PC-3 (cell line): ENCODE measurements at regions of chr4 and their contacts with region 1.

Region 1: DNA sequence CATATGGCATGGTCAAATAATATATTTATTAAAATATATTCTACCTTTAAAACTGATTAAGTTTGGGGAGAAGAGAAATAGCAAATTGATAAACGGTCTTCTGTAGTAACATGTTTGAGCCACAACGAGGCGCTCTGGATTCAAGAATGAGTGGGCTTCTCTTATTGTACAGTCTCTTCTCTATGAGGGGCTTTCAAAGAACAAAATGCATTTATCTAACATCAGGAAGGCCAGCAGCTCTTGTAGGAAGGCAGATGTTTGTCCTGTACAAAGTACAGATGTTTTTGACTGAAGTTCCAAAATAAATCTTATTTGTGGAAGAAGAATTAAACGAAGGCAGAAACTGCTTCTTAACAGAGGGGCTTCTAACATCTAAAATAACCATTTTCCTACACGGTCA is 153.6 kb downstream of the RASL11B start:
- DNase-seq: peak; percentile 53
- ATAC-seq: no peak
- H3K4me3 ChIP-seq: no peak overlapping the region
- H3K27ac ChIP-seq: no peak overlapping the region
- H3K4me1 ChIP-seq: peaks cover 7% of the 10 kb centered on the region
- H3K27me3 ChIP-seq: no peaks in the 10 kb centered on the region
- CTCF ChIP-seq: peak; percentile 83

Region 2: DNA sequence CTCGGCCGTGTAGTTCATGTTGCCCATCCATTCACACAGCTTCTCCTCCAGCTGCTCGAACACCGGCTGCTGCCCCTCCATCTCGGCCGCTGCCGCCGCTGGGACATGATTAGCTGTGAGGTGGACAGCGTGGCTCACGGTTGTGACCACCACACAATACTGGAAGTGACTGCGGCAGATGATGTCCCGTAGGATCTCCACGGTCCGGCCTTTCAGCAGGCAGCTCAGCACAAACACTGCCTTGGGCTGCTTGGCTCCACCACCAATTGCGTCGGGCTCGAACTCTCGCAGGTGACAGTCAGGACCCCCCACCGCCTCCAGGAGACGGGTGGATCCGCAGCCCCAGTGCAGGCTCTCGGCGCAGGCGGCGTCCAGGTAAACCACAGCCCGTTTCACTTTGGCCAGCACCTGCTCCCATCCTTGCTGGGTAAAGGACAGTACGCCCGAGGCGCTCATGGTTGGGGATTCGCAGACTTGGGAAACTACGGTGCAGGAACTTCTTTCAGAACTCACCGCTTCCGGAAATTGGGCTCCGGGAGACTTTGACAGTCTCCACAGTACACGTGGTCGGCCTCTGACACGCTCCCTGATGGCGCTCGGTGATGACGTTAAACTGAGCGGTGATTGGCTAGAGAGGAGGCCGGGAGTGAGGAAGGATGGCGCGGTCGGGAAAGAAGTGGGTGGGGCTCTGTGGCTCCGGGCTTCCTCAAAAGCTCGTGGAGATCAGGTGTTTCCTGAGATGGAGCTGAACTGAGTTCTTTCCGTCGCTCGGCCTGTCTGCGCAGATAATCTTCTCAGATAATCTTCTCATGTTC is 350.0 kb after region 1 on chr4 and contains the start of gene SCFD2:
- CTCF ChIA-PET with region 1: no interaction called
- POLR2A ChIA-PET with region 1: no interaction called
- intact Hi-C with region 1: loop called (anchors 10 kb)
- DNase-seq: peak; percentile 100
- ATAC-seq: peak; percentile 92
- H3K4me3 ChIP-seq: peak within 1 kb of the TSS; percentile 95
- H3K27ac ChIP-seq: peak within 1 kb of the TSS; percentile 51
- H3K4me1 ChIP-seq: peaks cover 34% of the 10 kb centered on the region
- H3K27me3 ChIP-seq: no peaks in the 10 kb centered on the region
- CTCF ChIP-seq: no peak
- total RNA-seq, gene SCFD2: 36.6 and 40.7 TPM in 2 replicates